ENCODE measurements at regions of chr10 and their contacts with region 1.

Region 1: DNA sequence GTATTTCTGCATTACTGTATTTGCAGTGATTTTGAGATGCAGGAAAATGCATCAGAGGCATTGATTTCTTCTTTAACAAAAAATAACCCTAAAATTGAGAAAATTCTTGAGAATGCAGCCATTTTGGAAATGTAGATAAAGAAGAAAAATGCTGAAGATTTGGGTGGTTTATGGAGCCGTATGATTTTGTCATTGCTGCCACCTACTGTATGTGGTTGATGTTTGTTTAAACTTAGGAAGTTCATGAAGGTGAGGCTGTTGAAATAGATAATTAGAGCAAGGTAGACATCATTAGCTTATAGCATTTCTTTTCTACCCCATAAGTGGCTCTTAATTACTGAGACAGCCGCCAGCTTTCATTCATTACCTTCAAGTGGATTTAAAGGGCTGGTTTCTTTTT is 92.1 kb upstream of the SAMD8 start:
- DNase-seq: no peak
- ATAC-seq: peak; percentile 46; the same call in 1 of the 2 replicates
- H3K4me3 ChIP-seq: no peak overlapping the region
- H3K27ac ChIP-seq: no peak overlapping the region
- H3K4me1 ChIP-seq: no peaks in the 10 kb centered on the region
- H3K27me3 ChIP-seq: no peaks in the 10 kb centered on the region
- CTCF ChIP-seq: peak; percentile 16 to 51 (median 44); a peak in 4 of 6 replicates
- POLR2A ChIP-seq: no peak
- RAD21 ChIP-seq: peak; percentile 76

Region 2: DNA sequence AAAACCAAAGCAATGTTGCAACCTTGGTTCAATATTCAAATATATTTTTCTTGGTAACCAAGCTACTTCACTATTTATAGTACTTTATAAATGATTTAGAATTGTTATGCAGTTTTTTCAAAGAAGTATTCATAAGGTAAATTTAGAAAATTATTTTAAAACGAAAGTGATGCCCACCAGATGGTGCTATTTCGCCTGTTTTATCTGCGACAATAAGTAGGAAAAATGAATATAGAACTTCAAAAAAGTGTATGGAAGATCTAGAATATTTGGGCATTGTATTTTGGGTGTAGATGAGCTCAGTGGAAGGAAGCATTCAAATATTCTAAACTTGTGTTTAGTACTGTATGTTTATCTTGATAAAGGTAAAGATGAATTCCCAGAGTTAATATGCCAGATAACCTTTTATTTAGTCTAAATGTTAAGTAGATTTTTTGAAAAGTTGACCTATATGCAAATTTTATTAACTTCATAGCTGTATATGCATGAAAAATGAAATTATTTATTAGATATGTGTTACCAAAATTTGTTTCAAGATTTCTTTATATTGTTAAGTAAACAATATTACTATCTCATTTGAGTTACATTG is 775.2 kb before region 1 on chr10:
- CTCF ChIA-PET with region 1: interaction called, 4 read pairs
- POLR2A ChIA-PET with region 1: no interaction called
- RAD21 ChIA-PET with region 1: no interaction called
- intact Hi-C with region 1: loop called (anchors 1 kb)
- DNase-seq: peak; percentile 42
- ATAC-seq: no peak
- H3K4me3 ChIP-seq: no peak overlapping the region
- H3K27ac ChIP-seq: no peak overlapping the region
- H3K4me1 ChIP-seq: no peaks in the 10 kb centered on the region
- H3K27me3 ChIP-seq: no peaks in the 10 kb centered on the region
- CTCF ChIP-seq: peak; percentile 32 to 65 (median 60)
- POLR2A ChIP-seq: no peak
- RAD21 ChIP-seq: peak; percentile 73

Region 3: DNA sequence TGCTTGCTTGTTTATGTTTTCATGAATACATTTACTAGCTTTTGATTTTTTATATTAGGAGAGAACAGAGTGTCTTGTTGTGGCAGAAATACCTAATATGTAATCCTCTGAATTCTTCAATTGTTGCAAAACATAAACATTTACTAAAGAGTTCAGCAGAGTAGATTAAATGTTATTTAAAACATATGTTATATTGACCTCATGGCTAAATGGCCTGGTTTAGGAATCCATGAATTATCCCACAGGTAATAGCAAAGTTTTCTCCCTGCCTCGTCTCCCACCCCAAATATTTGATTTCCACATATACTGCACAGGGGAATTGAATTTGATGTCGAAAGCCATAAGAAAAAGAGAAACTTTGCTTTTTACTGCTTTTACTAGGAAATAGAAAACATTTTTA is 756.5 kb before region 1 on chr10:
- CTCF ChIA-PET with region 1: interaction called, 8 read pairs
- POLR2A ChIA-PET with region 1: no interaction called
- RAD21 ChIA-PET with region 1: no interaction called
- intact Hi-C with region 1: loop called (anchors 1 kb)
- DNase-seq: no peak
- ATAC-seq: no peak
- H3K4me3 ChIP-seq: no peak overlapping the region
- H3K27ac ChIP-seq: no peak overlapping the region
- H3K4me1 ChIP-seq: peaks cover 0 to 7% of the 10 kb centered on the region in 2 experiments; a peak in 1 of 4 replicates
- H3K27me3 ChIP-seq: no peaks in the 10 kb centered on the region
- CTCF ChIP-seq: no peak
- POLR2A ChIP-seq: no peak
- RAD21 ChIP-seq: no peak

Region 4: GRCh38 chr10:74419958-74420375 is 599.4 kb before region 1 on chr10:
- CTCF ChIA-PET with region 1: no interaction called
- POLR2A ChIA-PET with region 1: no interaction called
- RAD21 ChIA-PET with region 1: no interaction called
- intact Hi-C with region 1: loop called (anchors 10 kb)
- DNase-seq: peak; percentile 10
- ATAC-seq: peak; percentile 57; the same call in 1 of the 2 replicates
- H3K4me3 ChIP-seq: no peak overlapping the region
- H3K27ac ChIP-seq: no peak overlapping the region
- H3K4me1 ChIP-seq: peaks cover 0 to 7% of the 10 kb centered on the region in 2 experiments; a peak in 1 of 4 replicates
- H3K27me3 ChIP-seq: no peaks in the 10 kb centered on the region
- CTCF ChIP-seq: peak; percentile 32 to 65 (median 57); a peak in 5 of 6 replicates
- POLR2A ChIP-seq: no peak
- RAD21 ChIP-seq: peak; percentile 48

Region 5: DNA sequence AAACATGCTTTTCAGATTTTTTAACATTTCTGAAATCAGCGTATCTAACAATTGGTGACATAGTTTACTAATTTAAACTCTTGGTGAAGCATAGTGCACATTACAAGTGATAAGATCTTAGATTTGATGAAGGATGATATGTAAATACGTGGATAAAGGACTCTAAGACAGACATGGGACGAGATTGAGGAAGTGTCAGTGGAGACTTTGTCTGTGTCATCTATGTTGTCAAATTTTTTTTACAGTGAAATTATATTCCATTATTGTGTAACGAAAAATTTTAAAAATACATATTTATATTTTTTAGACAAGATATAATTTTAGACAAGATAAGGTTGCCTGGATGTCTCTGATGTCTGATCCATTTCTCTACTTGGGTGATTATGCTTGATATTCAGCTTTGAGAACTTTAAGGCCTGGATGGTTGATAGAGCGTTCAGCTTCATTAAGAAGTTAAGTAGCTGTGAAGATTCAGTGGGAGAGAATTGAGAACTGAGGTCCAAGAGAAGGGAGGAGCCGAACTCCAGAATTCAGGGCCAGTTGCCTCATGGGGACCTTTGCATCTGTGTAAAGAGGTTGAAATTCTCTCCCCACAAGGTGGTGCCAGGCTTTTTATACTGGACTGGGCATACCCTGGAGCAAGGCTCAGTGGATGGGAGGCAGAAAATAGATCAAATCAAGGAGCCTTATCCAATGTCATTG is 130.3 kb before region 1 on chr10:
- CTCF ChIA-PET with region 1: interaction called, 3 read pairs
- POLR2A ChIA-PET with region 1: no interaction called
- RAD21 ChIA-PET with region 1: no interaction called
- intact Hi-C with region 1: loop called (anchors 2 kb)
- DNase-seq: peak; percentile 3
- ATAC-seq: peak; percentile 80
- H3K4me3 ChIP-seq: no peak overlapping the region
- H3K27ac ChIP-seq: no peak overlapping the region
- H3K4me1 ChIP-seq: no peaks in the 10 kb centered on the region
- H3K27me3 ChIP-seq: no peaks in the 10 kb centered on the region
- CTCF ChIP-seq: peak; percentile 22 to 37 (median 28); a peak in 3 of 6 replicates
- POLR2A ChIP-seq: no peak
- RAD21 ChIP-seq: peak; percentile 48; the same call in 1 of the 2 replicates

Region 6: GRCh38 chr10:75099952-75100763 is 80.8 kb after region 1 on chr10:
- CTCF ChIA-PET with region 1: no interaction called
- POLR2A ChIA-PET with region 1: no interaction called
- RAD21 ChIA-PET with region 1: interaction called in 1 of 2 experiments, 3 read pairs
- intact Hi-C with region 1: loop called (anchors 5 kb)
- DNase-seq: peak; percentile 48
- ATAC-seq: peak; percentile 98
- H3K4me3 ChIP-seq: no peak overlapping the region
- H3K27ac ChIP-seq: no peak overlapping the region
- H3K4me1 ChIP-seq: no peaks in the 10 kb centered on the region
- H3K27me3 ChIP-seq: no peaks in the 10 kb centered on the region
- CTCF ChIP-seq: peak; percentile 87 to 96 (median 89)
- POLR2A ChIP-seq: no peak
- RAD21 ChIP-seq: peak; percentile 96